B cell (primary cell): ENCODE measurements at regions of chr20 and their contacts with region 1.

Region 1: GRCh38 chr20:35454881-35455609 is at the start of gene CEP250:
- DNase-seq: peak; percentile 97
- ATAC-seq: peak; percentile 99
- H3K4me3 ChIP-seq: peak within 1 kb of the TSS; percentile 71 to 97 (median 94)
- H3K4me3 Mint-ChIP-seq: peak within 1 kb of the TSS; percentile 87
- H3K27ac ChIP-seq: peak within 1 kb of the TSS; percentile 82 to 97
- H3K27ac Mint-ChIP-seq: peak within 1 kb of the TSS; percentile 97
- H3K4me1 ChIP-seq: peaks cover 0 to 17% of the 10 kb centered on the region in 2 donors
- H3K4me1 Mint-ChIP-seq: peaks cover 16% of the 10 kb centered on the region
- H3K27me3 ChIP-seq: no peaks in the 10 kb centered on the region
- H3K27me3 Mint-ChIP-seq: no peaks in the 10 kb centered on the region
- CTCF ChIP-seq: no peak
- total RNA-seq, gene CEP250: 78.4 and 78.5 TPM in 2 replicates

Region 2: DNA sequence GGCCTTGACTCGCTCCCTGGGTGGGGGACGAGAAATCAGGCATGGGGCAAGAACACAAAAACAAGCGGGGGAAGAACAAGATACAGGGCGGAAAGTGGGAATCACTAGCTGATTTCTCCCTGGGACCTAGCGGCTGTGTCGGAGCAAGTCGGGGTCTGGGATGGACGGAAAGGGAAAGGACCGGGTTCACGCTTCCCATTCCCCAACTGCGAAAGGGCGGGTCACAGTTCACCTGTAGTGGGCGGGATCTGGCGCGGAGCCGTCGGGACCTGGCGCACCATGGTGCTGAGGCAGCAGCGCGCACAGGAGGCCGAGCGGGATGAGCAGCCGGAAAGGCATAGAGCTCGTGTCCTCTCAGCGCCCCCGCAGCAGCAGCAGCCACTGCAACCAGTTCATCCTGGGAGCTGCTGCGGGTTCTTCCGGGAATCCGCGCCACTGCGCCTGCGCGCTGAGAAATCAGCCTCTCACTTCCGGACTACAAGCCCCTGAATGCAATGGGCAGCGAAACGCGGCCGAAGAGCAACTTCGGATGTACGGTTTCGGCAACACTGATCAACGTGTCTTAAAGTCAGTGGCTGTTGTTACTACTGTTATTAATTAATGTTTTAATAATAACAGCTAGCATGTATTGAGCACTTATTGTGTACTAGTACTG is 308.0 kb before region 1 on chr20 and contains the start of gene EDEM2:
- CTCF ChIA-PET with region 1: no interaction called
- POLR2A ChIA-PET with region 1: no interaction called
- intact Hi-C with region 1: loop called (anchors 5 kb)
- DNase-seq: peak; percentile 95
- ATAC-seq: peak; percentile 80
- H3K4me3 ChIP-seq: peak within 1 kb of the TSS; percentile 69 to 94 (median 90)
- H3K4me3 Mint-ChIP-seq: peak within 1 kb of the TSS; percentile 96
- H3K27ac ChIP-seq: peak within 1 kb of the TSS; percentile 79 to 89
- H3K27ac Mint-ChIP-seq: peak within 1 kb of the TSS; percentile 94
- H3K4me1 ChIP-seq: peaks cover 33 to 43% of the 10 kb centered on the region in 2 donors
- H3K4me1 Mint-ChIP-seq: peaks cover 36% of the 10 kb centered on the region
- H3K27me3 ChIP-seq: no peaks in the 10 kb centered on the region
- H3K27me3 Mint-ChIP-seq: no peaks in the 10 kb centered on the region
- CTCF ChIP-seq: no peak
- total RNA-seq, gene EDEM2: 28.1 and 28.6 TPM in 2 replicates

Region 3: GRCh38 chr20:35410613-35411012 is 44.4 kb before region 1 on chr20:
- CTCF ChIA-PET with region 1: no interaction called
- POLR2A ChIA-PET with region 1: interaction called, 3 read pairs
- intact Hi-C with region 1: loop called (anchors 1 kb)
- DNase-seq: no peak
- ATAC-seq: no peak
- H3K4me3 ChIP-seq: no peak overlapping the region
- H3K4me3 Mint-ChIP-seq: peak overlapping the region; percentile 99
- H3K27ac ChIP-seq: no peak overlapping the region
- H3K27ac Mint-ChIP-seq: peak overlapping the region; percentile 99
- H3K4me1 ChIP-seq: peaks cover 9 to 15% of the 10 kb centered on the region in 2 donors
- H3K4me1 Mint-ChIP-seq: peaks cover 24% of the 10 kb centered on the region
- H3K27me3 ChIP-seq: no peaks in the 10 kb centered on the region
- H3K27me3 Mint-ChIP-seq: peaks cover 4% of the 10 kb centered on the region
- CTCF ChIP-seq: no peak

Region 4: GRCh38 chr20:35490736-35491181 is 35.7 kb after region 1 on chr20:
- CTCF ChIA-PET with region 1: no interaction called
- POLR2A ChIA-PET with region 1: interaction called, 3 read pairs
- intact Hi-C with region 1: loop called (anchors 2 kb)
- DNase-seq: peak; percentile 81
- ATAC-seq: peak; percentile 100
- H3K4me3 ChIP-seq: peak overlapping the region; percentile 73 to 92 (median 85)
- H3K4me3 Mint-ChIP-seq: peak overlapping the region; percentile 98
- H3K27ac ChIP-seq: peak overlapping the region; percentile 83 to 92
- H3K27ac Mint-ChIP-seq: peak overlapping the region; percentile 96
- H3K4me1 ChIP-seq: peaks cover 39 to 58% of the 10 kb centered on the region in 2 donors
- H3K4me1 Mint-ChIP-seq: peaks cover 54% of the 10 kb centered on the region
- H3K27me3 ChIP-seq: no peaks in the 10 kb centered on the region
- H3K27me3 Mint-ChIP-seq: no peaks in the 10 kb centered on the region
- CTCF ChIP-seq: no peak

Region 5: GRCh38 chr20:35699127-35699975 is 244.3 kb after region 1 on chr20 and contains the starts of genes NFS1 and ROMO1:
- CTCF ChIA-PET with region 1: no interaction called
- POLR2A ChIA-PET with region 1: no interaction called
- intact Hi-C with region 1: loop called (anchors 2 kb)
- DNase-seq: peak; percentile 92
- ATAC-seq: peak; percentile 88
- H3K4me3 ChIP-seq: peak within 1 kb of the TSS; percentile 69 to 98 (median 91)
- H3K4me3 Mint-ChIP-seq: peak within 1 kb of the TSS; percentile 85
- H3K27ac ChIP-seq: peak within 1 kb of the TSS; percentile 84 to 96
- H3K27ac Mint-ChIP-seq: peak within 1 kb of the TSS; percentile 97
- H3K4me1 ChIP-seq: peaks cover 17 to 23% of the 10 kb centered on the region in 2 donors
- H3K4me1 Mint-ChIP-seq: peaks cover 33% of the 10 kb centered on the region
- H3K27me3 ChIP-seq: no peaks in the 10 kb centered on the region
- H3K27me3 Mint-ChIP-seq: no peaks in the 10 kb centered on the region
- CTCF ChIP-seq: peak; percentile 31
- total RNA-seq, gene NFS1: 29.0 and 29.4 TPM in 2 replicates
- total RNA-seq, gene ROMO1: 33.2 and 38.1 TPM in 2 replicates

Region 6: DNA sequence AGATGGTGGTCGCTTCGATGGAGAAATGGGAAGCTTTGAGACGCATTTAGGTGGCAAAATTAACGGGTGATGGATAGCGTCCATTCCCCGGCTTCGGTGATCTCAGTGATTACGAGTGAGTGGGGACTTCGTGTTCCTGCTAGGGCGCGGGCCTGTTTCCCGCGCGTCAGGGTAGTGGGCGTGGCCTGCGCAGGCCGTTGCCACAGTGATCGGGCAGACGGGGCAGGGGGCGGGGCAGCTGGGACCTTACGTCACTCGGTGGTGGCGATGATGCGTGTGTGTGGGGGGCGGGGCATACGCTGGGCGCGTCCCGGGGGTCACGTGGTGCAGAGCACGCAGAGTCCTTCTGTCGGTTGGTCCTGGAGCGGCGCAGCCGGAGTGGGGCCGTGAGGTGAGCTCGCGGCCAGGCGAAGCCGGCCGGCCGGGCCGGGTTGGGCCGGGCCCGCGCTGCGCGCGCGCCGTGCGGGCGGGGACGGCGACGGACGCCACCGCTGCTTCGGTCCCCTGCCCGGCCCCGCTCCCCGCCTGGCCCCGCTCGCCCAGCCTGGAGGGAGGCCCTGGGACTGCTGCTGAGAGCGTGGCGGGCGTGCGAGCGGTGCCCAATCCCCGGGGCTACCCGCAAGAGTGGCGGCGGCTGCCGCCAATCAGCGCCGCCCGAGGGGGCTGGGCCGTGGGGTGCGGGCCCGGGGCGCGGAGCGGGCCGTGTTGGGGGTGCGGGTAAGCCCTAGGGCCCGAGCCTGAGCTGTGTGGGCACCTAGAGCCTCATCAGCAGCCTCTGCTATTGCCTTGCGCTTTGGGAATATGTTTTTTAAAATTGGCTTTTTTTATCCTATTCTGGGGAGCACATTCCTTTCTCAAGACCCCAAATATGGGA is 316.9 kb after region 1 on chr20 and contains the start of gene PHF20:
- CTCF ChIA-PET with region 1: no interaction called
- POLR2A ChIA-PET with region 1: interaction called, 3 read pairs
- intact Hi-C with region 1: loop called (anchors 1 kb)
- DNase-seq: peak; percentile 100
- ATAC-seq: peak; percentile 80
- H3K4me3 ChIP-seq: peak within 1 kb of the TSS; percentile 67 to 98 (median 89)
- H3K4me3 Mint-ChIP-seq: peak within 1 kb of the TSS; percentile 88
- H3K27ac ChIP-seq: peak within 1 kb of the TSS; percentile 95 to 99
- H3K27ac Mint-ChIP-seq: peak within 1 kb of the TSS; percentile 99
- H3K4me1 ChIP-seq: peaks cover 80 to 88% of the 10 kb centered on the region in 2 donors
- H3K4me1 Mint-ChIP-seq: peaks cover 72% of the 10 kb centered on the region
- H3K27me3 ChIP-seq: no peaks in the 10 kb centered on the region
- H3K27me3 Mint-ChIP-seq: no peaks in the 10 kb centered on the region
- CTCF ChIP-seq: no peak
- total RNA-seq, gene PHF20: 92.3 and 101 TPM in 2 replicates

Region 7: DNA sequence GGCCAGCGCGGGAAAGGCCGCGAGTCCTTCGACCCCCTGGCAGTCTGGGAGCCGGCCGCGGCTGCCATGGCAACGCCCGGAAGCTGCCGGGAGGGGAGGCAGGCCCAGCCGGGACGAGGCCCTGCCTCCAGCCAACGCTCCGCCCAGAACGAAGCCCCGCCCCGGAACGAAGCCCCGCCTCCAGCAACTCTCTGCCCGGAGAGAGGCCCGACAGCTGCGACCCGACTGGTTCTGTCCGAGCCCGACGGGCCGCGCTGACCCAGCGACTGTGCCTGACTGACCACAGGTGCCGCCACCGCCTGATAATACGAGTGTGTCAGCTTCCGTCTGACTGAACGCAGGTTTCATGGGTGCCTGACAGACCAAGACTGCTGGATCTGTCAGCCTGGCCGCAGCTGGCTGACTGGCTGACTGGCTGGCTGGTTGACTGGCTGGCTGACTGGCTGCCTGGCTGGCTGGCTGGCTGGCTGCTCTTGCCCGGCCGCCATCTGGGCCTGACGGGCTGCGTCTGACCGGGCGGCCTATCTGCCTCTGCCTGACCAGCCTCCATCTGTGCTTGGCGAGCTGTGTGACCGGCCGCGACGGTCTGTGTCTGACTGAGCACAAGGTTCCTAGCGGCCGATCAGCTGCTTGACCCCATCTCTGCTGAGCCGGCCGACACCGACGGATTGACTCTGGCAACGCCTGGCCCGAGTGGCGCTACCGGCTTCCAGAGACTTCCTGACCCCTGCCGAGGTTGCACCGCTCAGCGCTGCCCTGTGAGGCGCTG is 609.8 kb after region 1 on chr20:
- CTCF ChIA-PET with region 1: no interaction called
- POLR2A ChIA-PET with region 1: no interaction called
- intact Hi-C with region 1: loop called (anchors 2 kb)
- DNase-seq: peak; percentile 95
- ATAC-seq: peak; percentile 97
- H3K4me3 ChIP-seq: peak overlapping the region; percentile 52 to 77 (median 72)
- H3K4me3 Mint-ChIP-seq: peak overlapping the region; percentile 94
- H3K27ac ChIP-seq: peak overlapping the region; percentile 24 to 83
- H3K27ac Mint-ChIP-seq: peak overlapping the region; percentile 89
- H3K4me1 ChIP-seq: peaks cover 11 to 17% of the 10 kb centered on the region in 2 donors
- H3K4me1 Mint-ChIP-seq: peaks cover 6% of the 10 kb centered on the region
- H3K27me3 ChIP-seq: peaks cover 0 to 7% (median 1%) of the 10 kb centered on the region in 4 experiments
- H3K27me3 Mint-ChIP-seq: peaks cover 4% of the 10 kb centered on the region
- CTCF ChIP-seq: no peak